ENCODE measurements at regions of chr6 and their contacts with region 1.

Region 1: GRCh38 chr6:2853761-2854395 is 12.2 kb upstream of the SERPINB1 start:
- DNase-seq: peak; percentile 66 to 92 (median 88)
- H3K4me3 ChIP-seq: peak overlapping the region in 2 of 4 donors; percentile 37 to 45
- H3K27ac ChIP-seq: peak overlapping the region; percentile 60 to 94 (median 90)
- H3K4me1 ChIP-seq: peaks cover 24 to 63% of the 10 kb centered on the region in 2 donors
- H3K27me3 ChIP-seq: no peaks in the 10 kb centered on the region
- CTCF ChIP-seq: peak; percentile 25 to 65 (median 48)
- POLR2A ChIP-seq: peak in 1 of 2 donors; percentile 75

Region 2: DNA sequence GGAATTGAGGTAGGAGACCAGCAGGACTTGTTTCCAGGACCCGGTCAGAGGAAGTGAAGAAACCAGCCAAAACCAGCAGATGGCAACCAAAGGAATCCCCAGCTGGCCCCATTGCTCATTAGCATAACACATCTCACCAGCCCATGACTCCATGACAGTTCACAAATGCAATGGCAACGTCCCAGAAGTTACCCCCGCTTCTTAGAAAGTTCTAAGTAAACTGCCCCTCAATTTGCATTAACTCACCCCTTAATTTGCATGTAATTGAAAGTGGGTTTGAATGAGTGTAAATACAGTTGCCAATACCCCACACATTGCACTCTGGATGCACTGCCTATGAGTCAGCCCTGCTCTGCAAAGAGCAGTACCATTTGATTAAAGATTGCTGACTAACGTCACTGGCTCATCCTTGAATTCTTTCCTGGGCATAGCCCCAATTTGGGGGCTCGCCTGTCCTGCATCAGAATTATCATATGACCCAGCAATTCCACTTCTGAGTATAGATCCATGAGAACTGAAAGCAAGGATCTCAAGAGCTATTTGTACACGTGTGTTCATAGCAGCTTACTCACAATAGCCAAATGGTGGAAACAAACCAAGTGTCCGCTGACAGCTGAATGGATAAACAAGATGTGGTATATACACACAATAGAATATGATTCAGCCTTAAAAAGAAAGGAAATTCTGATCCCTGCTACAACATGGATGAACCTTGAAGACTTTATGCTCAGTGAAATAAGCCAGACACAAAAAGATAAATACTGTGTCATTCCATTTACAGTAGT is 139.6 kb before region 1 on chr6:
- intact Hi-C with region 1: no loop called
- DNase-seq: peak; percentile 69 to 88 (median 85)
- H3K4me3 ChIP-seq: no peak overlapping the region
- H3K27ac ChIP-seq: peak overlapping the region in 4 of 5 donors; percentile 20 to 69 (median 62)
- H3K4me1 ChIP-seq: no peaks in the 10 kb centered on the region
- H3K27me3 ChIP-seq: no peaks in the 10 kb centered on the region
- CTCF ChIP-seq: no peak
- POLR2A ChIP-seq: peak in 1 of 2 donors; percentile 20

Region 3: GRCh38 chr6:2791124-2791974 is 62.5 kb before region 1 on chr6:
- intact Hi-C with region 1: no loop called
- DNase-seq: peak; percentile 59 to 88 (median 72)
- H3K4me3 ChIP-seq: no peak overlapping the region
- H3K27ac ChIP-seq: peak overlapping the region in 1 of 5 donors; percentile 15
- H3K4me1 ChIP-seq: no peaks in the 10 kb centered on the region
- H3K27me3 ChIP-seq: no peaks in the 10 kb centered on the region
- CTCF ChIP-seq: peak; percentile 45 to 87 (median 79)
- POLR2A ChIP-seq: no peak

Region 4: DNA sequence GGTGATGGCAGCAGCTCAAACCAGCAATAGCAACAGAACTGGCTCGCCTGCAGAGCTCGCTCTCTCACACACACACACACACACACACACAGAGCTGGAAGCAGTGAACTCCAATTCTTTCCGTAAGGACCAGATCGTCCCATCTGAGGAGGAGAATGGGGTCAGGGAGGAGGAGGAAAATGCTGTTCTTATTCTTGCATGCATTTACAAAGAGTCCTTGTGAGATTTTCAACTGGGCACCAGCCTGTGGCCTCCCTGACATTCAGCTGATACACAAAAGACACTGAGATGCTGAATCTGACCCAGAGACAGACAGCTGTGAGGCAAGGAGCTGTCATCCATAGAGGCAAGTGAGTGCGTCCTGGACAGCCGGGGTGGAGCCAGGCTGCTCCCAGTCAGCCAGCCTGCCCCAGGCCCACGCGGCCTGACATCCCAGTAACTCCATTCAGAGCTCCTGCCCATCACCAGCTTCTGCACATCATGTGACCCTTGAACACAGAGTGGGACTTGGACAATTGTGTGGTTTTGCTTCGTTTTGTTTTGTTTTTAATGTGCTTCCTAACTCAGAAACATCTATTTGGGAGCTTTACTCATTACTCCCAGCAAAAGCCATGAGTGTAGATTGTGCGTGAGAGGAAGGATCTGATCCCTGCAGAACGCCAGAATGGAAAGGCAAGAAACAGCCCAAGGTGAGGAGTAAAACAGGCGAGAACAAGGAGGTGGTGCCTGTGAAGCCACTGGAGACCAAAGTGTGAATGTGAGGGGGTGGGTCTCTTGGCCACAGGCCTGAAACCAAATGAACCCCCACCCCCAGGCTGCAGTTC is 47.2 kb after region 1 on chr6:
- intact Hi-C with region 1: loop called in 1 of 2 experiments (anchors 5 kb)
- DNase-seq: peak in 4 of 7 donors; percentile 26 to 59 (median 30)
- H3K4me3 ChIP-seq: peak overlapping the region in 1 of 4 donors; percentile 78
- H3K27ac ChIP-seq: peak overlapping the region in 2 of 5 donors; percentile 95 to 96
- H3K4me1 ChIP-seq: peaks cover 14 to 40% of the 10 kb centered on the region in 2 donors
- H3K27me3 ChIP-seq: no peaks in the 10 kb centered on the region
- CTCF ChIP-seq: no peak
- POLR2A ChIP-seq: no peak

Measured in adrenal gland (tissue), 19 donors.